GM10248 (cell line): ENCODE measurements at regions of chr14 and their contacts with region 1.

Region 1: GRCh38 chr14:66359500-66359899 is 126.7 kb upstream of the CCDC196 start:
- DNase-seq: peak; percentile 40
- CTCF ChIP-seq: peak; percentile 47

Region 2: GRCh38 chr14:66342429-66342828 is 17.1 kb before region 1 on chr14:
- CTCF ChIA-PET with region 1: interaction called, 10 read pairs
- POLR2A ChIA-PET with region 1: no interaction called
- DNase-seq: no peak
- CTCF ChIP-seq: no peak

Region 3: GRCh38 chr14:66380143-66380542 is 20.6 kb after region 1 on chr14:
- CTCF ChIA-PET with region 1: interaction called, 15 read pairs
- POLR2A ChIA-PET with region 1: no interaction called
- DNase-seq: no peak
- CTCF ChIP-seq: no peak

Region 4: DNA sequence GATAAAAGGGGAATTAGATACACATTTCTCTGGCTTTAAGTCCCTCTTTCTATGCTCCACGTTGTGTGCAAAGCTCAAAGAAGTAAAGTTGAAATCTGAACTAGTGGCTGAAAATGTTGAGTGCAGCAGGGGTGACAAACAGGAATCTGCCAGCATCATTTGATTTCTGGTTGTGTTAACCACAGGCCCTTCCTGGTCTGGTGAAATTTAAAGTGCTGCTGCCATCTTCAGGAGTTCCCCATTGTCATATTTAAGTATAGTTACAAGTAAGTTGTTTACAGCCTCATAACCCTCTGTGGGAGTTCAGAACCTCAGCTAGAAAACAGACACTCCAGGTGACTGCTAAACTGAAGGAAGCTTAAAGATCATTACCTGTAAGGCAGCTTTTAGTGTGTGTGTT is 35.8 kb after region 1 on chr14:
- CTCF ChIA-PET with region 1: interaction called, 138 read pairs
- POLR2A ChIA-PET with region 1: no interaction called
- DNase-seq: peak; percentile 17
- CTCF ChIP-seq: peak; percentile 22

Region 5: GRCh38 chr14:66403183-66403582 is 43.7 kb after region 1 on chr14:
- CTCF ChIA-PET with region 1: interaction called, 138 read pairs
- POLR2A ChIA-PET with region 1: no interaction called
- DNase-seq: peak; percentile 11
- CTCF ChIP-seq: peak; percentile 49

Region 6: DNA sequence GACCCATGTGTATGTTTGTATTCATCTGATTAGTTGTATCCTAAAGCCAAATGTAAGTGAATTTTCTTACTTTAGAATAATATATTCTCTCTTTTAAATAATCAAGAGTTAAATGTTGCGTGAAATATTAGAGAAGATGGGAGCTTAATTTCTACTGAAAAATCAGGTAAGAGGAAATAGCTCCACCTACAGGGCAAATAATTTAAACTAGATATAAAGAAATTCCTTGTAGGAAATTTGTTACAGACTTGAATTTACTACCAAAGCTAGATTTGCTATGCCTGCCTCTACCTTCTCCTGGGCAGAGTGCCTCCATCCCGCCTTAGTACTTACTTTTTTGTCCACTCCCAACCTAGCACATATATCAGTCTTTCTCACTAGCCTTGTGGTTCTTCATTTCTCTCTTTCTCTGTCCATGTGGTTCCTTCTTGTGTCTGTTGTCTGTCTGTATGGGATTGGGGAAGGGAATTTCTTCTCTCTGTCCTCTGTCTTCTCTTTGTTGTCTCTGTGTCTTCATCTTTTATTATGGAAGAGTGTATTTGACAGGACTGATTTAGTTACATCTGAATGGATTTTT is 926.5 kb after region 1 on chr14:
- CTCF ChIA-PET with region 1: interaction called, 21 read pairs
- POLR2A ChIA-PET with region 1: no interaction called
- DNase-seq: peak; percentile 30
- CTCF ChIP-seq: peak; percentile 35